ENCODE measurements at regions of chr5 and their contacts with region 1.

Region 1: GRCh38 chr5:58849921-58850667 is 267.2 kb downstream of the RAB3C start:
- DNase-seq: peak; percentile 26
- CTCF ChIP-seq: peak; percentile 37

Region 2: DNA sequence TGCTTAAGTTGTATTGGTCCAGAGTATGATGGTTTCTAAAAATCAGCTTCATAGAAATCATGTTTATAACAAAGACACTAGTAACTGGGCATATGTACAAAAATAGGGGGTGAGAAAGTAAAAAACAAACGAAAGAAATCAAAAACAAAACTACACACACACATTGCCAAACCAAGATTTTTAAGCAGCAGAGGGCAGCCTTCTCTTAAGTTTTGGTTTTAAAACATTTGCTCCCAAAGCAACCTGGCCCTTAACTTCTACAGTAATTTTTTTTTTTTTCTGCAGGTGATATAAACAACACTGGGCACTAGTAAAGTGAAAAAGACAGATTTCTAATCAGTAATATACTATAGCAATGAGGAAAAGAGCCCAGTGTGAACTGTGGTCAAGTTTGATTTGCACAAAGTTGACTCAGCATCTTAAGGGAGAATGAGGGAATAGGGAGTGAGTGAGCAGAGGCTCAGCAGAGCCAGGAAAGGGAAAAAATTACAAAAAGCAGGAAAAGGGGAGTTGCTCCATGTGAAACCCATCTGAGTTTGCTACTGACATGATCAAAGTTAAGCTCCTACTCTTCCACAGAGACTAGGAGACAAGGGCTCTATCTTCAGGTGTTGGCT is 372.2 kb before region 1 on chr5:
- CTCF ChIA-PET with region 1: interaction called, 49 read pairs
- POLR2A ChIA-PET with region 1: no interaction called
- DNase-seq: no peak
- CTCF ChIP-seq: peak; percentile 26

Region 3: GRCh38 chr5:58498340-58498942 is 351.7 kb before region 1 on chr5:
- CTCF ChIA-PET with region 1: interaction called, 39 read pairs
- POLR2A ChIA-PET with region 1: no interaction called
- DNase-seq: no peak
- CTCF ChIP-seq: peak; percentile 17

Region 4: DNA sequence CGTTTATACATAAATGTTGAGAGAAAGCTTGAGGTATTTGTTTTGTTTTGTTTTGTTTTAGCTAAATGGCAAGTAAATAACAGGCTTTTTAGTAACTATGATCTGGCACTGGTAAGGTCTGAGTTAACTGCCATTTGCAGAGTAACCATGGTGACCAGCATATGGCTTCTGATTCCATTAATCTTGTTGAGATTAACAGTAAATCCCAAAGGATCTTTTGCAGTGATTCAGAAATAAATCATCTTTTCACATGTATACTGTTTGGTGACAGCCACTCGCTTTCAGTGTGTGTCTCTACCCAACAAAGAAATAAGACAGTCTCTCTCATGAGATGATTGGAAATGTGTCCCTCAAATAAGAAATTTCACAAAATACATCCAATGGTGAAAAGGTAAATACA is 31.6 kb before region 1 on chr5:
- CTCF ChIA-PET with region 1: interaction called, 22 read pairs
- POLR2A ChIA-PET with region 1: no interaction called
- DNase-seq: no peak
- CTCF ChIP-seq: no peak

Region 5: DNA sequence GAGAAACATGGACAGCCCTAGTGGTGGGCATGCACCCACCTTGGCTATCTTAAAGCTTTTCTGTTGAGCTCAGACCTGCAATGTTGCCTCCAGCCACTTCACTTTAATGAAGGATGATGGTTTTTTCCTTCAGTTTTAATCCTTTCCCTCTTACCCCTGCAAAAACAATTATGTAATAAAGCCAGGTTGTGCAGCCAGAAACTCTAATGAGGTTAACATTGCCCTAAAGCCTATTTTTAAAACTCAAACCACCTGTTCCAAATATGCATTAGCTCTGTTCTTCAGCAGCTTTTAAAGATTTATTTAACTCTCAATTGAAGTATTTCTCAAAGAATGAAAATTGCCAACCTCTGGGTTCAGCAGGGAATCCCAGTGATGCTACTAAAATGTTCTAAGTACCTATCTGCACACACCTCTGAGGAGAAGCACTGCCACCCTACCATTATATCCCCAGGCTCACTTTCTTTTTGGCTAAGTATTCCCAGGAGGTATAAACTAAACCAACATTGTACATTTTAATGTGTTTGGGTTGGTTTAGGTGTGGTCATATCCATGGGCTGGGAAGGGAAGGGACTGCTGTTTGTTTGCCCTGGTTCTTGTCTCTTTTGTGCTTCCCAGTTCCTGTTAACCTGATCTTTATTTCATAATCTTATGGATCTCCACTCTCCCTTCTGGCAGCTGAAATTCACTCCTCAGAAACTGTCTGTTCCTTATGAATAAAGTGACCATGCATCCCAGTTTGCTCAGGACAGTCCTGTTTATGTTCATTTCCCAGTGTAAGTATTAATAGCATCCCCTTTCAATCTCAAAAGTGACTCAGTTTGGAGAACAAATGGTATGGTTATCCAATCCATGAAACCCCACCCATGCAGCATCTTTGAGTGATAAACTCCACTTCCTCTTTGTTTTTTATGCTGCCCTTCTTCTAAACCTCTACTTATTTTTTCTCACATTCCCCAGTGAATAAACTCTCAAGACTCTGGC is 15.6 kb before region 1 on chr5:
- CTCF ChIA-PET with region 1: interaction called, 14 read pairs
- POLR2A ChIA-PET with region 1: no interaction called
- DNase-seq: no peak
- CTCF ChIP-seq: no peak

Measured in GM10248 (cell line).